Dendritic cell treated with granulocyte-macrophage colony-stimulating factor and Interleukin-4, amounts not matched to agents 40 ng/mL and 50 ng/mL, for 4 days (primary cell): ENCODE measurements at regions of chr11 and their contacts with region 1.

Region 1: DNA sequence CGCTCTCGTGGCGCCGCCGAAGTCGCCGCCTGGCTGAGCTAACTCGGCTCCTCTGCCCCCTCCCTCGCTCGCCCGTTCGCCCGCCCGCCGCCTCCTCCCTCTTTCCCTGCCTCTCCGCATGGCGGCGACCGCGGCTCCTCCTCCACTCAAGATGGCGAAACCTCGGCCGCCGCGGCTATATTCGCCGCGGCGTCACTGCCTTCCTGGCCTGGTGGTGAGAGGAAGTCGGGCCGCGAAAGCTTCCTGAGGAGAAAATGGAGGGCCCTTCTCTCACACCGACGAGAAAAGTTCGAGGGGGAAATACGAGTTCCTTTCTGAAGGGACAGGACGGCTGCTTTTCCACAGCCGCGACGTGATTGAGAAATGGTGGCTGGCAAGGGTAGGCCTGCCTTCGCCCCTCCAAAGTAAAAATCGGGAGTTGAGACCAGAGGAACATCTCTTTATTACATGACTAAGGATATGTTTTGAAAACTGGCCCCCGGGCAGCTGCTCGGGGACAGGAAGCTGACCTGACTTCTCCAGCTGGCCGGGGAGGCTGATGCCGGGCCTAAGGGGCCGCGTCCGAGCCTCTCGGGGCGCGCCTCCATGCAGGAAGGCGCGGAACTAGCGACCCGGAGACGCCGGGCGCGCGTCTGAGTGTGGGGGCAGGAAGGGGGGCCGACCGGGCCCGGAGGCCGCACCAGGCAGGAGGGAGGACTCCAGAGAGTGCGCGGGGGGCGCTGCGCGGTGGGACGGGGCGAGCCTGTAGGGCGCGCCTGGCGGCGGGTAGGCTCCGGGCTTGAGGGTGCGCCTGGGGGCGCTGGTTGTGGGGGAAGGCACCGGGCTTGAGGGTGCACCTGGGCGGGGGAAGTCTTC is at the start of gene DDX6:
- H3K4me3 Mint-ChIP-seq: peak within 1 kb of the TSS; percentile 100
- H3K27ac Mint-ChIP-seq: peak within 1 kb of the TSS; percentile 99
- H3K4me1 Mint-ChIP-seq: peaks cover 33% of the 10 kb centered on the region
- H3K27me3 Mint-ChIP-seq: no peaks in the 10 kb centered on the region

Region 2: GRCh38 chr11:118689851-118690552 is 101.3 kb before region 1 on chr11:
- intact Hi-C with region 1: loop called (anchors 5 kb)
- H3K4me3 Mint-ChIP-seq: peak overlapping the region; percentile 81
- H3K27ac Mint-ChIP-seq: peak overlapping the region; percentile 79
- H3K4me1 Mint-ChIP-seq: peaks cover 46% of the 10 kb centered on the region
- H3K27me3 Mint-ChIP-seq: peaks cover 48% of the 10 kb centered on the region

Region 3: DNA sequence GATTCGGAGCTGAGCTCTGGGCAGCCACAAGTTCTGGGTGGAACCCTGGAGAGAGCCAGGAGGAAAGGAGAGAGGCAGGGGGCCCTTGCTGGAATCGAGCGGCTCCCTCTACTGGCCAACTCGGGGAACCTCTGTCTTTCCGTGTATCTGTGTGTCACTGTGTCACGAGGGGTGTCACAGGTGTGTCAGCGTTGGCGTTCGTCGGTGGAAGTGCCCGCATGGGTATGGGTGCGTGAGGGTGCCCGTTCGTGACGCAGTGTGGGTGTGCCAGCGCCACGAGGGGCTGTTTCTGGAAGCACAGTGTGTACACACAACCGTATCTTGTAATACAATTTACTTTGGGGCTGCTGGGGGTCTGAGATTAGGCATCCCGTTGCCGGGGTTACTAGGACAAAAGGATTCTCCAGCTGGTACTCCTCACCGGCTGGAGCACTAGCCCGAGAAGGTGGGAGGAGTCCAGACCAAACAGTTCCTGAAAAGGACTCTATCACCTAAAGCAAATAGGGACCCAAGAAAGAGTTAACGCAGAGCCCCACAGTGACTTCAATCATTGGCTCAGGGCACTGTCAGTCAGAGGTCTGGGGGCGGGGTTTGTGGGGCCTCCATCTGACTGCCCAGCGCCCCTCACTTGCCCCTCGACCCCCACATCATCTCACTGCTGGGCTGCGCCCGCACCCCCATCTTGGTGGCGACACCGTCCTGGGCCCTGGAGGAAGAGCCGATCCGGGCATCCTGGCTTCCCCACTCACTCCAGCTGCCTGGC is 137.0 kb after region 1 on chr11:
- intact Hi-C with region 1: loop called (anchors 5 kb)
- H3K4me3 Mint-ChIP-seq: peak overlapping the region; percentile 80
- H3K27ac Mint-ChIP-seq: peak overlapping the region; percentile 66
- H3K4me1 Mint-ChIP-seq: peaks cover 77% of the 10 kb centered on the region
- H3K27me3 Mint-ChIP-seq: peaks cover 14% of the 10 kb centered on the region